ENCODE measurements at regions of chr6 and their contacts with region 1.

Region 1: DNA sequence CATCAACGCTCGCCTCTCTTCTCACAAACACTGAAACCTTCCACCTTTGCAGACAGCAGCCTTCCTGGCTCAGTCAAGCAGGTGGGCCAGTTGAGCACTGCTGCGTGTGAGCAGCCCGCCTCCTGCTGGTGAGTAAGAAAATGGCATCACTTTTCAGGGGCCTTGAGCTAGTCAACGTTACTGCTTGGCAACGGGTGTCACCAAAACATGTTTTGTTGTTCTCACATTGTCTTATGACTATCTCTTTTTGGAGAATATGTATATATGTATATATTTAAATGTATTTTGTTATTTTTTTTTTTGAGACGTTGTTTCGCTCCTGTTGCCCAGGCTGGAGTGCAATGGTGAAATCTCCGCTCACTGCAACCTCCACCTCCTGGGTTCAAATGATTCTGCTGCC is 97.0 kb upstream of the AGPAT4 start:
- DNase-seq: peak; percentile 66
- H3K4me3 ChIP-seq: no peak overlapping the region
- H3K27ac ChIP-seq: no peak overlapping the region
- H3K4me1 ChIP-seq: peaks cover 23% of the 10 kb centered on the region
- H3K27me3 ChIP-seq: no peaks in the 10 kb centered on the region
- CTCF ChIP-seq: peak; percentile 96 to 98

Region 2: DNA sequence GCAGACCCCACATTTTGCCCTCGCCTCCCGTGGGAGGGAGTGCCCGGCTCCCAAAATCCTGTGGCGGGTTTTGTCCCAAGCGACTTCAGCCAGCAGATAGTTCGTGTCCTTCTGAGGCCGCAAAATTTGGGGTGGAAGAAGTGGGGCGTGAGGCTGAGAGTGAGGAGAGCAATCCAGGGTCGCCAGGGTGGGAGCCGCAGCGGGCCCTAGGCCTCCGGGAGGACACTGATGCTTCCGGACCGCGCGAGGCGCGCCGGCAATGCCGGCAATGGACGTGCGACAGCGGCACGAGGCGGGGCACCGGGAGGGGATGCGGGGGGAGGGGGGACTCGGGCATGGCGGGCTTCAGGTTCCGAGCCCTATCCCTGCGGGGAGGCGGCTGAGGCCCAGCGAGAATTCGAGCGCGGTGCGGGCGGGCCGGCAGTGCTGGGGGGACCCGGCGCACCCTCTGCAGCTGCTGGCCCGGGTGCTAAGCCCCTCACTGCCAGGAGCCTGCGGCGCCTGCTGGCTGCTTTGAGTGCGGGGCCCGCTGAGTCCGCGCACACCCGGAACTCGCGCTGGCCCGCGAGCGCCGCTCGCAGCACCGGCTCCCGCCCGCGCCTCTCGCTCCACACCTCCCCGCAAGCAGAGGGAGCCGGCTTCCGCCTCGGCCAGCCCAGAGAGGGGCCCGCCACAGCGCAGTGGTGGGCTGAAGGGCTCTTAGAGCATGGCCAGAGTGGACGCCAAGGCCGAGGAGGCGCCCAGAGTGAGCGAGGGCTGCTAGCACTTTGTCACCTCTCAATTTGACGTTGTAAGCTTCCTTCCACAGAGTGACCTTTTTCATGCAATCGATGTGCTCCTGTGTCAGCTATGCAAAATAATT is 850.6 kb before region 1 on chr6:
- CTCF ChIA-PET with region 1: no interaction called
- dilution Hi-C with region 1: no loop called
- in situ Hi-C with region 1: no loop called
- intact Hi-C with region 1: loop called (anchors 5 kb)
- DNase-seq: peak; percentile 1
- H3K4me3 ChIP-seq: peak overlapping the region; percentile 52 to 91 (median 69)
- H3K27ac ChIP-seq: no peak overlapping the region
- H3K4me1 ChIP-seq: peaks cover 3% of the 10 kb centered on the region
- H3K27me3 ChIP-seq: no peaks in the 10 kb centered on the region
- CTCF ChIP-seq: no peak

Region 3: GRCh38 chr6:160742090-160742489 is 628.8 kb before region 1 on chr6:
- CTCF ChIA-PET with region 1: interaction called, 3 read pairs
- dilution Hi-C with region 1: no loop called
- in situ Hi-C with region 1: loop called (anchors 10 kb)
- intact Hi-C with region 1: no loop called
- DNase-seq: no peak
- H3K4me3 ChIP-seq: no peak overlapping the region
- H3K27ac ChIP-seq: no peak overlapping the region
- H3K4me1 ChIP-seq: no peaks in the 10 kb centered on the region
- H3K27me3 ChIP-seq: no peaks in the 10 kb centered on the region
- CTCF ChIP-seq: no peak

Region 4: DNA sequence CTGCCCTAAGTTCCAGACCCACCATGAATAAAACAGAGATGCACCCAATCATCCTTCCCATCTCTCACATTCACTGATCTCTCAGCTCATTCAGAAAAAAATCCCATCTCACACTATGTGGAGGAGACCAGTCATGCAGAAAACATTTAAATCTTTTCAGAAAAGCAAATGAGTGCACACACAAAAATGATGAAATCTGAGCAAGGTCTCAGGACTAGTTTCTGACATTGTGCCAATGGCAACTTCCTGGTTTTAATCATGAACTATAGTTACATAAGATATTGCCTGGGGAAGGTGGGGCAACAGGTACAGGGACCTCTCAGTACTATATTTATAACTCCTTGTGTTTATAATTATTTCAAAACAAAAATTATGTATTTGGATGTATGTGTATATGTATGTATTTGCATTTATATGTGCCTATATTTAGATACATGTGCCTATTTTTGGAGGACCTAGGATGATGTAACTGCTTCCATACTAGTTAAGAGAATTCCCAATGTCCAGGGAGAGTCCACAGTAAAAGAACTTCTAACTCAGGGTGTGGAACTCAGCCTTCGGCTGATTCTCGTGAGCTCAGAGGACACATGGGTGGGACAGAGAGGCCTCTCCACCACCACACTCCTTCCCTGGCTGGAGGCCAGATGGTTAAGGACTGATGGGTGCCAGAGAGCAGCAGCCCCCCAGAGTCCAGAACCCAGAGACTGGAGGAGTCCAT is 451.0 kb before region 1 on chr6:
- CTCF ChIA-PET with region 1: no interaction called
- dilution Hi-C with region 1: loop called (anchors 25 kb)
- in situ Hi-C with region 1: no loop called
- intact Hi-C with region 1: no loop called
- DNase-seq: peak; percentile 83
- H3K4me3 ChIP-seq: no peak overlapping the region
- H3K27ac ChIP-seq: no peak overlapping the region
- H3K4me1 ChIP-seq: peaks cover 10% of the 10 kb centered on the region
- H3K27me3 ChIP-seq: no peaks in the 10 kb centered on the region
- CTCF ChIP-seq: no peak

Region 5: GRCh38 chr6:160992061-160992979 is 378.6 kb before region 1 on chr6:
- CTCF ChIA-PET with region 1: interaction called, 4 read pairs
- dilution Hi-C with region 1: no loop called
- in situ Hi-C with region 1: no loop called
- intact Hi-C with region 1: loop called (anchors 1 kb)
- DNase-seq: peak; percentile 65
- H3K4me3 ChIP-seq: peak overlapping the region; percentile 89 to 93 (median 93)
- H3K27ac ChIP-seq: peak overlapping the region; percentile 78
- H3K4me1 ChIP-seq: peaks cover 20% of the 10 kb centered on the region
- H3K27me3 ChIP-seq: no peaks in the 10 kb centered on the region
- CTCF ChIP-seq: peak; percentile 63 to 80

Region 6: GRCh38 chr6:161152907-161153662 is 217.8 kb before region 1 on chr6:
- CTCF ChIA-PET with region 1: no interaction called
- dilution Hi-C with region 1: no loop called
- in situ Hi-C with region 1: loop called in 1 of 2 experiments (anchors 25 kb)
- intact Hi-C with region 1: loop called (anchors 1 kb)
- DNase-seq: no peak
- H3K4me3 ChIP-seq: no peak overlapping the region
- H3K27ac ChIP-seq: no peak overlapping the region
- H3K4me1 ChIP-seq: no peaks in the 10 kb centered on the region
- H3K27me3 ChIP-seq: no peaks in the 10 kb centered on the region
- CTCF ChIP-seq: peak; percentile 46 to 64

Region 7: GRCh38 chr6:161273752-161274487 is 97.0 kb before region 1 on chr6 and contains the start of gene AGPAT4:
- CTCF ChIA-PET with region 1: interaction called, 5 read pairs
- dilution Hi-C with region 1: no loop called
- in situ Hi-C with region 1: no loop called
- intact Hi-C with region 1: loop called (anchors 2 kb)
- DNase-seq: peak; percentile 95
- H3K4me3 ChIP-seq: peak within 1 kb of the TSS; percentile 67 to 85 (median 69)
- H3K27ac ChIP-seq: peak within 1 kb of the TSS; percentile 95
- H3K4me1 ChIP-seq: peaks cover 12% of the 10 kb centered on the region
- H3K27me3 ChIP-seq: no peaks in the 10 kb centered on the region
- CTCF ChIP-seq: no peak
- total RNA-seq, gene AGPAT4: 12.5 to 15.8 TPM

Measured in mammary epithelial cell (primary cell).